Prostate gland (tissue), 2 donors: ENCODE measurements at regions of chr2 and their contacts with region 1.

Region 1: DNA sequence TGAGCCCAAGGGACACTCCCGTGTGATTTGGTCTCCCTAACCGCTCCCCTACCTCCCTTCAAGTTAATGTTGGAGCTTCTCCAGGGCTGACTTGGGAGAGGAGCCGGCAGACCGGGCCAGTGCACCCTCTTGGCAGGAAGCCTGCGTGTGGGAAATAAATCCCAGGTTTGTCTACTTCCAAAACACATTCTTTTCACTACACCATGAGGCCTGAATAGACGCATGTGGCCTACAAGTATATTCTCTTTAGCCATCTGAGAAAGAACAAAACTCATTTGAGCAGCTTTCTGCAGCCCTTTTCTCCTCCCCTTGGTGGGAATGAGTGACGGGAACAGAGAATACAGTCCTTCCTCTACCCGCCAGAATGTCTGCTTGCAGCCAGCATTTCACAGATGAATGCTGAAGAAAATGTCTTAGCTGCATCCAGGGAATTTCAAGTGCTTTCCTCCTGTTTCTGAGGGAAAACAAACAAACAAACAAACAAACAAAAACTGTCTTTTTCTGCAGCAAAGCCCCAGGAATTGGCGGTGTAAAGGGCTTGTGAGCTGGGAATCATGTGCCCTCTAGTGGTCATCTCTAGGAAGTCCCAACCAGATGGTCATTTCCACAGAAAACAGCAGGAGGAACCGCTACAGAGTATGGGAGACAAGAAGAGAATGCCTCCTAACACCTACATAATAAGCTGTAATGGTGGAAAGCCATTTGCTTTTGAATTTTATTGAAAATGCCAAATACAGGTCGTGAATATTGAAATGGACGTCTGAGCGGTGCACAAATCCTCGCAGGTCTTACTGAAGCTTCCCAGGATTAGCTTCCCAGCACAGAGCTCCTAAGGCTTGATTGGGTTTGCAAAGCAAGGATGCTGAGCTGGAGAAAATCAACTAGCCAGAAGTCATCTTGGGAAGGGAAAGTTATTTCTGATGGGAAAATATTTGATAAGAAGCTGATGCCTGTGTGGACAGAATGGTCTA is 41.2 kb upstream of the DAPL1 start:
- DNase-seq: peak; percentile 37
- H3K4me3 ChIP-seq: no peak overlapping the region
- H3K27ac ChIP-seq: no peak overlapping the region
- H3K4me1 ChIP-seq: no peaks in the 10 kb centered on the region
- H3K27me3 ChIP-seq: no peaks in the 10 kb centered on the region
- CTCF ChIP-seq: peak; percentile 70 to 86 (median 78)
- POLR2A ChIP-seq: no peak

Region 2: GRCh38 chr2:158456309-158457066 is 297.4 kb before region 1 on chr2 and contains the starts of genes CCDC148 and PKP4:
- intact Hi-C with region 1: loop called (anchors 5 kb)
- DNase-seq: peak; percentile 94
- H3K4me3 ChIP-seq: peak within 1 kb of the TSS; percentile 76 to 94
- H3K27ac ChIP-seq: peak within 1 kb of the TSS; percentile 93 to 94
- H3K4me1 ChIP-seq: no peaks in the 10 kb centered on the region
- H3K27me3 ChIP-seq: no peaks in the 10 kb centered on the region
- CTCF ChIP-seq: peak in 2 of 4 experiments; percentile 27 to 38
- POLR2A ChIP-seq: peak; percentile 79
- total RNA-seq, gene CCDC148: 1.5 to 1.6 TPM
- total RNA-seq, gene PKP4: 49.0 to 57.9 TPM